Left cardiac atrium (tissue), 4 donors: ENCODE measurements at regions of chr19 and their contacts with region 1.

Region 1: DNA sequence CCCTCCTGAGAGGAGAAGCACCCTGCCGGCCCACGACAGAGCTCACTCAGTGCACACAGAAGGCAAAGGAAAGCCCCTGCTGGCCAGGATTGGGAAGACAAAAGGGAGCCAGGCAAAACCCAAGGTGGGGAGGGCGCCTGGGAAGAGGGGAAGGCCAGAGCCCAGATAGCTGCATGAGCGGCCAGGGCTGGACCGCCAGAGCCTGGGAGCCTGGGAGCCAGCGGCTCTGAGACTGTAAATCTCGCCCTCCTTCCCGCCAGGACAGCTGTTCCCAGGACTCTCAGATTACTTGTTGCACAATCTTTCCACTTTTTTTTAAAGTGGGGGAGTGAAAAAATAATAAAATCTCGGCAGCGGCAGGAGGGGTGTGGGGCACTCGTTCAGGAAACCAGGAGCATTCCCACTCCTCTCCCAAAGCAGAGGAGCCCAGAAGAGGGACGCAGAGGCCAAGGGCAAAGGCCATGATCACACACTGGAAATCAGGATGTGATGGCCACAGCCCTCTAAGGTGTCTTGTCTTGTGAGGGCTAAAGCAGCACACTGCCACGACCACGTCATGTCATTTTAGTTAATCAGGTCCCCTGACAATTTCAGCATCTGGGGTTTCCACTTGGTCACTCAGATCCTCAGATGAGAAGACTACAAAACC is 19.6 kb upstream of the EPHX3 start:
- DNase-seq: peak; percentile 87
- ATAC-seq: peak; percentile 72 to 74

Region 2: DNA sequence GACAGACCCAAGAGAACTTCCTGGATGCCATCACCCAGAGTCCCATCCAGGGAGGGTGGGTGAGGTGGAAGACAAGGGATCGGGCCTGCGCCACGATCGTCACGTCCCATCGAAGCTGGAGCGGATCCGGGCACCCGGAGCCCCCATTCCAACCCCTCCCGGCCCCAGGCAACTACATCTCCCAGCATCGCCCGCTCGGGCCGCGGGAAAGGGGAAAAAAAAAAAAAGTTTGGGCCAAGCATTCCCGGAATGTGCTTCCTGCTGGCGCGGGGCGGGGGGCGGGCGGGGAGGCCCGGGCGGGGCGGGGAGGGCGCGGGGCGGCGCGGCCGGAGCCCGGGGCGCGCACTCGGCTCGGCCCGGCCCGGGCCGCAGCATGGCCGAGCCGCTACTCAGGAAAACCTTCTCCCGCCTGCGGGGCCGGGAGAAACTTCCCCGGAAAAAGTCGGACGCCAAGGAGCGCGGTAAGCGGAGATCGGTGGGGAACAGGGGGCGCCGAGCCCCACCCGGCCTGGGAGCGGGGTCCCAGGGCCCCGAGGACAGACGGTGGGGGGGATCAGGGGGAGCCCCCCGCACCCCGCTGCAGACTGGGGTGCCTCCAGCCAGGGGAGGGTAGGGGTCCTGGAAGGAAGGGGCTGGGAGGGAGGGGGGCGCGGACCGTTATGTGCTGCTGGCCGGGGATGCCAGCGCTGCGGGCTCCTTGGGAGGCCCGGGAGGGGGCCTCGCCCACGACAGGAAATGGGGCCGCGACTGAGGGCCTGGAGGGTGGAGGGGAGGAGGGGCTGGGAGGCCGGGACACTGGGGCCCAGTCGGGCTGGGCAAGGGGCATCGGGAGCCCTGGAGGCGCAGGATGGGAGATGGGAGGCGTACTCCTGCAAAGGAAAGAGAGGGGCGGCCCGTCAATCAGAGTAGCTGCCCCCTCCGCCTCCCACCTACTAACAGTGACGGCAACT is 144.5 kb before region 1 on chr19 and contains the start of gene SYDE1:
- intact Hi-C with region 1: loop called in 1 of 2 experiments (anchors 5 kb)
- DNase-seq: peak; percentile 68
- ATAC-seq: peak; percentile 78 to 87
- total RNA-seq, gene SYDE1: 16.7 to 22.1 TPM

Region 3: GRCh38 chr19:15463861-15464371 is 212.0 kb after region 1 on chr19:
- intact Hi-C with region 1: no loop called
- DNase-seq: no peak
- ATAC-seq: peak; percentile 77 to 82

Region 4: GRCh38 chr19:15532779-15533521 is 281.1 kb after region 1 on chr19:
- intact Hi-C with region 1: no loop called
- DNase-seq: no peak
- ATAC-seq: no peak